ENCODE measurements at regions of chr6 and their contacts with region 1.

Region 1: GRCh38 chr6:36094753-36095496 is 35.4 kb upstream of the MAPK13 start:
- DNase-seq: peak; percentile 80 to 93
- ATAC-seq: peak; percentile 59 to 79 (median 61)
- H3K4me3 ChIP-seq: no peak overlapping the region
- H3K4me3 Mint-ChIP-seq: no peak overlapping the region
- H3K27ac ChIP-seq: no peak overlapping the region
- H3K27ac Mint-ChIP-seq: peak overlapping the region; percentile 80 to 96
- H3K4me1 ChIP-seq: peaks cover 20% of the 10 kb centered on the region
- H3K4me1 Mint-ChIP-seq: peaks cover 43 to 45% of the 10 kb centered on the region in 2 donors
- H3K27me3 ChIP-seq: no peaks in the 10 kb centered on the region
- H3K27me3 Mint-ChIP-seq: no peaks in the 10 kb centered on the region
- CTCF ChIP-seq: peak; percentile 94

Region 2: DNA sequence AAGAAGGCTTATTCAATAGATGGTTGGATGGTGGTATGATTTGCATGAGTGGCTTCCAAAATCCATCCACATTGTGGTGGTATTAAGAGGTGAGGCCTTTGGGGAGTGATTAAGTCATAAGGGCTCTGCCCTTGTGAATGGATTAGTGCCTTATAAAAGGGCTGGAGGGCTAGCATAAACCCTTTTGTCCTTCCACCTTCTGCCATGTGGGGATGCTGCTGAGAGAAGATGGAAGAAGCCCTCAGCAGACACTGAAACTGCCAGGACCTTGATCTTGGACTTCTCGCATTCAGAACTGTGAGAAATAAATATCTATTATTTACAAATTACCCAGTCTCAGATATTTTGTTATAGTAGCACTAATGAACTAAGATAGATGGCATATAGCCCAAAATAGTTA is 146.2 kb before region 1 on chr6:
- intact Hi-C with region 1: no loop called
- DNase-seq: no peak
- ATAC-seq: no peak
- H3K4me3 ChIP-seq: no peak overlapping the region
- H3K4me3 Mint-ChIP-seq: no peak overlapping the region
- H3K27ac ChIP-seq: no peak overlapping the region
- H3K27ac Mint-ChIP-seq: no peak overlapping the region
- H3K4me1 ChIP-seq: no peaks in the 10 kb centered on the region
- H3K4me1 Mint-ChIP-seq: no peaks in the 10 kb centered on the region
- H3K27me3 ChIP-seq: no peaks in the 10 kb centered on the region
- H3K27me3 Mint-ChIP-seq: peaks cover 3 to 7% of the 10 kb centered on the region in 2 donors
- CTCF ChIP-seq: no peak

Region 3: GRCh38 chr6:36052097-36052496 is 42.8 kb before region 1 on chr6:
- intact Hi-C with region 1: no loop called
- DNase-seq: no peak
- ATAC-seq: no peak
- H3K4me3 ChIP-seq: no peak overlapping the region
- H3K4me3 Mint-ChIP-seq: no peak overlapping the region
- H3K27ac ChIP-seq: no peak overlapping the region
- H3K27ac Mint-ChIP-seq: no peak overlapping the region
- H3K4me1 ChIP-seq: peaks cover 9% of the 10 kb centered on the region
- H3K4me1 Mint-ChIP-seq: peaks cover 22% of the 10 kb centered on the region in 2 donors
- H3K27me3 ChIP-seq: no peaks in the 10 kb centered on the region
- H3K27me3 Mint-ChIP-seq: no peaks in the 10 kb centered on the region
- CTCF ChIP-seq: no peak

Region 4: DNA sequence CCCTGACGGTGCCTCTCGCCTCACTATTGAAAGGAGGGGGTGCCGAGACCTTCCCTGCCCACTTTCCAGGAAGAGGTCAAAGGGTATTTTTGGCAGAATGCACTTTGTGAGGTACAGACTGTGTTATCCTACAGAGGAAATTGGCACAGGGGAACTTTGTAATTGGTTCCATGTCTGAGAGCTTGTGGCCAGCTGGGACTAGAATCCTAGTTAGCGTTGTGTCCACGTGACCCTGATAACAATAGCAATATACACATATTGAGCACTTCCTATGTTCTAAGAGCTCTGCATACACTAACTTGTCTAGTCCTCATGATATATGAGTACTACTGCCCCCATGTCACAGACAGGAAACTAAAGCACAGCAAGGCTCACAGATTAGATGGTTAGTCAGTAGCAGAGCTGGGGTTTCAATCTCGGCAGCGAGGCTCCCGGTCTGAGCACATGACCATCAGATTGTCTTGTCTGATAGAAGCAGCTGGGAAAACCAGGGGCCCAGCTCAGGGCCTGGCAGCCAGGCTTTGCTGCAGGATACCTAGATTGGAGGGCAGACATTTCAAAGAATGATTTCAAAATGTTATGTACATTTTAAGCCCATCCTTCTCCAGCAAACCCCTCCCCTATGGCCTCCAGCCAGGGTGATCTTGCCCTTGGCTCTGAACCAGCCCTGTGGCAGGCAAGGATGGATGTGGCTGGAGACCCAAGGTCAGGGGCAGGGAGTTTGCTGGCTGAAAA is 36.8 kb after region 1 on chr6:
- intact Hi-C with region 1: loop called (anchors 2 kb)
- DNase-seq: peak in 1 of 2 donors; percentile 74
- ATAC-seq: peak; percentile 69 to 73 (median 70)
- H3K4me3 ChIP-seq: peak overlapping the region; percentile 61
- H3K4me3 Mint-ChIP-seq: peak overlapping the region; percentile 85
- H3K27ac ChIP-seq: peak overlapping the region; percentile 90
- H3K27ac Mint-ChIP-seq: peak overlapping the region; percentile 85 to 93
- H3K4me1 ChIP-seq: peaks cover 56% of the 10 kb centered on the region
- H3K4me1 Mint-ChIP-seq: peaks cover 36 to 72% of the 10 kb centered on the region in 2 donors
- H3K27me3 ChIP-seq: no peaks in the 10 kb centered on the region
- H3K27me3 Mint-ChIP-seq: no peaks in the 10 kb centered on the region
- CTCF ChIP-seq: no peak

Region 5: GRCh38 chr6:36302227-36302976 is 207.5 kb after region 1 on chr6:
- intact Hi-C with region 1: no loop called
- DNase-seq: peak; percentile 82 to 98
- ATAC-seq: peak; percentile 97 to 100 (median 100)
- H3K4me3 ChIP-seq: no peak overlapping the region
- H3K4me3 Mint-ChIP-seq: no peak overlapping the region
- H3K27ac ChIP-seq: no peak overlapping the region
- H3K27ac Mint-ChIP-seq: no peak overlapping the region
- H3K4me1 ChIP-seq: peaks cover 6% of the 10 kb centered on the region
- H3K4me1 Mint-ChIP-seq: peaks cover 7 to 9% of the 10 kb centered on the region in 2 donors
- H3K27me3 ChIP-seq: no peaks in the 10 kb centered on the region
- H3K27me3 Mint-ChIP-seq: peaks cover 13 to 15% of the 10 kb centered on the region in 2 donors
- CTCF ChIP-seq: peak; percentile 99